ENCODE measurements at regions of chr16 and their contacts with region 1.

Region 1: GRCh38 chr16:27449434-27450195 is 47.6 kb downstream of the IL21R start:
- DNase-seq: no peak
- H3K4me3 ChIP-seq: no peak overlapping the region
- H3K27ac ChIP-seq: no peak overlapping the region
- H3K4me1 ChIP-seq: peaks cover 11% of the 10 kb centered on the region; the same call in 1 of the 2 replicates
- H3K27me3 ChIP-seq: no peaks in the 10 kb centered on the region

Region 2: DNA sequence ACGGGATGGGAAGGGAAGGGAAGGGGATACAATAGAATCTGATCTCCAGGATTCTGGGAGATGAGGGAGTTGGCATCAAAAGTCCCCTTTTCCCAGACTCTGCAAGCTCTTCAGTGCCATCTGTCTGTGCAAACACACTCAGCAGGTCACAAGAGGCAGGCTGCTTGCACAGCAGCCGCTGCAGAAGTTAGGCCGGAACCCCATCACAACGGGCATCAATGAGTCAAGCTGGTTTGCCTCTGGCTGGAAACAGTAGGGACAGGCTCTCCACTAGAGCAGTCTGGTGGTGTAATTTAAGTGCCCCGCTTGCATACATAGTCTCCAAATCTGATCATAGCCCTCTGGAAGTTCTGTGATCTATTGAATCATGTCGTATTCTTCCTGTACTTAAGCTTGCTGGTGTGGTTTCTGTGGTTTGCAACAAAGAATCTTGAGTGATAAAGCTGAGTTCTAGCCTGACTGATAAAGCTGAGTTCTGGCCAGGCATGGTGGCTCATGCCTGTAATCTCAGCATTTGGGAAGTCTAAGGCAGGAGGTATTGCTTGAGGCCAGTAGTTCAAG is 280.0 kb before region 1 on chr16:
- in situ Hi-C with region 1: loop called (anchors 10 kb)
- DNase-seq: peak; percentile 83
- H3K4me3 ChIP-seq: no peak overlapping the region
- H3K27ac ChIP-seq: peak overlapping the region; percentile 44
- H3K4me1 ChIP-seq: peaks cover 2% of the 10 kb centered on the region
- H3K27me3 ChIP-seq: no peaks in the 10 kb centered on the region

Region 3: DNA sequence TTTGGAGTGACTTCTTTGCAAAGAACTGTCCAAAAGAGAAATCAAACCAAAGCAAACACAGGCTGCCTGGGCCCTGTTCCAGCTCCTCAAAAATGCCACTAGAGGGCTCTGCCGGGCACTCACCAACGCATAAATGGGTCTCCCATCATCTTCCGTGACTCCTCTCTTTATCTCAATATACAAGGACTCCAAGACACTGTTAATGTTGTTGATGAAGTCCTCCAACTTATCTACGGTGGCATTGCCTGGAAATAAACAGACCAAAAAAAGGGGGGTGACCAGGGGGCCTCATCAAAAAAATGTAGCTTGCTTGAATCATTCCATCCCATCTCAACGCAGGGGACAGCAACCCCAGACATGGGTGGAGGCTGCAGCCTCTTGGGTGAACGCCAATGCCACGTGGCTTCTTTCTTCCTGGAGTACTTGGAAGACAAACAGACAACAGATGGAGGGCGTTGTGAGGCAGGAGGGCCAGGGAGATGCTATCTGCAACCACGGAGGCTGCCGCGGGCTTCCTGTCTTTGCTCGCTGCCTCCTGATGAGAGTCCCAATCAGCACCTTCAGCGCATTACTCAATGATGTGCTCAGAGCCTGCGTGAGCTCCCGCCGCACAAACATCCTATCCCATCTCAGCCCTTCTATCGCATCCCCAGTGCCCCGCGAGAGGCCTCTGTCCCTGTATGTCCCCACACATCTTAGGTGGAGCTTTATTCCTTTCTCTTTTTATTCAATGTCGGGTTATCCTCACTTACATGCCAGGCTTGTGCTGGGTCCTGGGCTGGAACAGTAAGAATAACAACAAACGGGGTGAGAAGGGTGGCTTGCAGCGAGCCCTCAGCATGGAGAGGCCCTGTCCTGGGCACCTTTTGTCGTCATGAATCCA is 214.3 kb before region 1 on chr16:
- in situ Hi-C with region 1: loop called (anchors 10 kb)
- DNase-seq: peak; percentile 92
- H3K4me3 ChIP-seq: peak overlapping the region; percentile 24
- H3K27ac ChIP-seq: peak overlapping the region; percentile 86
- H3K4me1 ChIP-seq: peaks cover 24% of the 10 kb centered on the region
- H3K27me3 ChIP-seq: no peaks in the 10 kb centered on the region

Measured in GM23248 (cell line).